Transverse colon (tissue), 4 donors: ENCODE measurements at regions of chr3 and their contacts with region 1.

Region 1: GRCh38 chr3:172476347-172476746 is 28.1 kb upstream of the GHSR start:
- DNase-seq: no peak
- H3K4me3 ChIP-seq: peak overlapping the region in 1 of 4 donors; percentile 21
- H3K27ac ChIP-seq: no peak overlapping the region
- H3K4me1 ChIP-seq: peaks cover 0 to 6% (median 1%) of the 10 kb centered on the region in 4 donors
- H3K27me3 ChIP-seq: no peaks in the 10 kb centered on the region
- CTCF ChIP-seq: no peak
- EP300 ChIP-seq: no peak
- POLR2A ChIP-seq: no peak

Region 2: GRCh38 chr3:172595641-172596393 is 119.5 kb after region 1 on chr3:
- in situ Hi-C with region 1: loop called in 3 of 4 experiments (anchors 5 to 10 kb)
- intact Hi-C with region 1: no loop called
- DNase-seq: peak; percentile 32
- H3K4me3 ChIP-seq: peak overlapping the region in 3 of 4 donors; percentile 18 to 42 (median 19)
- H3K27ac ChIP-seq: peak overlapping the region; percentile 83 to 88 (median 86)
- H3K4me1 ChIP-seq: peaks cover 15 to 35% (median 27%) of the 10 kb centered on the region in 4 donors
- H3K27me3 ChIP-seq: no peaks in the 10 kb centered on the region
- CTCF ChIP-seq: peak; percentile 74 to 88 (median 83)
- EP300 ChIP-seq: no peak
- POLR2A ChIP-seq: no peak